MCF 10A (cell line): ENCODE measurements at regions of chr15 and their contacts with region 1.

Region 1: GRCh38 chr15:94793641-94794040 is 562.3 kb downstream of the MCTP2 start:
- DNase-seq: peak; percentile 47
- H3K4me3 Mint-ChIP-seq: no peak overlapping the region
- H3K27ac Mint-ChIP-seq: no peak overlapping the region
- H3K4me1 Mint-ChIP-seq: peaks cover 35% of the 10 kb centered on the region
- H3K27me3 Mint-ChIP-seq: no peaks in the 10 kb centered on the region
- CTCF ChIP-seq: no peak

Region 2: DNA sequence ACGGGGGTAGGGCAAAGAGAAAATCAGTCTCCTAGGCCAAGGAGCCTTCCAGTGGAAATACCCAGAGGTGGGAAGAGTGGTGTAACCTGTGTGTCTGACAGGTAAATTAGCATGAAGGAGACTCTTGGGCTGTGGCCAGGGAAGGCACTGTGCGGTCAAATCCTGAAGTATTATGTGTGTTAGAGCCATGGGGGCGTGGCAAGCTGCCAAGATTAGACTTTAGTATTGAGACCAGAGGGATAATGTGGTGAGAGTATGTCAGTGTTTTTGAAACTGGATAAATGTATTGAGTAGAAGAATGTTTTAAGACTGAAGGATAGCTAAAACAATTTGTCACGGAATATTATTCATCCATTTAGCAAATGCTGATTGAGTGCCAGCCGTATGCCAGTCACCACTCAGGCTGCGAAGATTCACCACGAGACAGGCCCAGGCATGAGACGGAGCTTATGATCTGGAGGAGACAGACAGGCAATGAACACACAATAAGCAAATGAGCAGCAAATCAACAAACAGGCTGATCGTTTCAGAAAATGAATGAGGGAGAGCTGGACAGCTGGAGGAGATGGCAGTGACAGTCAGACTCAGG is 116.3 kb before region 1 on chr15:
- CTCF ChIA-PET with region 1: interaction called, 5 read pairs
- POLR2A ChIA-PET with region 1: interaction called, 36 read pairs
- intact Hi-C with region 1: loop called (anchors 2 kb)
- DNase-seq: peak; percentile 87
- H3K4me3 Mint-ChIP-seq: peak overlapping the region; percentile 59
- H3K27ac Mint-ChIP-seq: peak overlapping the region; percentile 79
- H3K4me1 Mint-ChIP-seq: peaks cover 31% of the 10 kb centered on the region
- H3K27me3 Mint-ChIP-seq: no peaks in the 10 kb centered on the region
- CTCF ChIP-seq: no peak

Region 3: DNA sequence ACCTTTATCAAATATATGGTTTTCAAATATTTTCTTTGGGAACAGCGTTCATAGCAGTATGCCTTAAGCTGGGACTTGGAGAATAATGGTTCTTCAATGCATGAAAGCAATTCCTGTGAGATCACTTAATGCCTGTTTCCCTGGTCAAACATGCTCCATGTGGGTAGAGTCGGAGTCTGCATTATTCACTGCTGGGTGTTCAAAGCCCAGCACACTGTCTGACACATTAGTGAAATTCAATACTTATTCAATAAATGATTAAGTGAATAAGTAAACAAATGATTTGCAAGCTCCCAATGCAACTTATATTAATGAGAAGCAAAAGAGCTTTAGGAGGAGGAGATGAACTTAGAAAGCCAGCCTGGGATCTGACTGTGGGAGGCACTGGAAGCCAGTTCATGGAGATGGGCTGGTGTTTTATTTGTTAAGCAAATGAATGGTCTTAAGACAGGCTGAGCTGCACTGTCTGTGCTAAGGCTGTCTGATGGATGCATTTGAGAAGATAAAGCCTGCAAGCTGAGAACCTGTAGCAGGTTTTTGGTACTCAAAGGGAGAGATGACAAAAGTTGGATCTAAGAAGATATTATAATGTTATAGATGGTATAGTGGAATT is 71.5 kb before region 1 on chr15:
- CTCF ChIA-PET with region 1: no interaction called
- POLR2A ChIA-PET with region 1: interaction called, 13 read pairs
- intact Hi-C with region 1: no loop called
- DNase-seq: no peak
- H3K4me3 Mint-ChIP-seq: no peak overlapping the region
- H3K27ac Mint-ChIP-seq: no peak overlapping the region
- H3K4me1 Mint-ChIP-seq: no peaks in the 10 kb centered on the region
- H3K27me3 Mint-ChIP-seq: no peaks in the 10 kb centered on the region
- CTCF ChIP-seq: no peak